ENCODE measurements at regions of chr12 and their contacts with region 1.

Region 1: GRCh38 chr12:128387811-128388422 is 120.9 kb downstream of the TMEM132C start:
- DNase-seq: peak; percentile 33 to 37
- ATAC-seq: peak in 7 of 8 donors; percentile 44 to 69 (median 50)
- H3K4me3 ChIP-seq: no peak overlapping the region
- H3K27ac ChIP-seq: peak overlapping the region in 5 of 10 donors; percentile 13 to 49 (median 35)
- H3K4me1 ChIP-seq: peaks cover 0 to 10% (median 0%) of the 10 kb centered on the region in 9 donors
- H3K27me3 ChIP-seq: peaks cover 0 to 49% (median 24%) of the 10 kb centered on the region in 7 donors
- CTCF ChIP-seq: peak; percentile 27 to 66 (median 60)

Region 2: DNA sequence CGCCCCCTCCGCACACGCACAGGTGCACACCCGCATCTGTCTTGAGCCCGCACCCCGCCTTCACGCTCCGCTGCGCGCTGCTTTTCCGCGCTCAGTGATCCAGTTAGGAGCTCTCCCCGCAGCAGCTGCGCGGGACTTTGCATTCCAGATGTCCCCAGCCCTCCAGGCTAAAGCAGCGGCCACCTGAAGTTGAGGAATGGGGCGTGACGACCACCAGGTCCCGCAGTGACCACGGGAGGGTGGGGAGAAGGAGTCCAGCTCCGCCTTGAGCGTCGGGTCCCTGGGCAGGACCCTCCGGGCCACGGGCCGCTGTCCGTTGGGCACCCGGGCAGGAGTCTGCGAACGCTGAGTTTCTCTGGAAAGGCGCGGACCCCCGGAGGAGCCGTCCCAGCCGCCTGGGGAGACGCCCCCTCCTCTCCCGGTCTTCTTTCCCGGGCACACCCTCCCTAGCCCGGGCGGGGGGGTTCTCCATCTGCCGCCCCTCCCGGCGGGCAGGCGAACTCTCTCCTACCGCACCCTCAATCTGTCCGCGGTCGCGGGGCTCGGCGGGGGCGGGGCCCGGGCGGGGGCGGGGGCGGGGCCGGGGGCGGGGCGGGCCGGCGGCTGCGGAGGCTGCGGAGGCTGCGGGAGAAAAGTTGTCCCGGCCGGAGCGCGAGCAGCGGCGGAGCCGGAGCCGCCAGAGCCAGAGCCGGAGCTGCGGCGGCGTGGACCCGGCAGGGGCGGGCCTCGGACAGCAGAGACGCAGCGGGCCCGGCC is 121.2 kb before region 1 on chr12 and contains the start of gene TMEM132C:
- intact Hi-C with region 1: loop called in 4 of 10 experiments (anchors 5 to 10 kb)
- DNase-seq: no peak
- ATAC-seq: peak in 4 of 8 donors; percentile 9 to 39 (median 18)
- H3K4me3 ChIP-seq: peak within 1 kb of the TSS in 9 of 10 donors; percentile 30 to 53 (median 41)
- H3K27ac ChIP-seq: no peak within 1 kb of the TSS
- H3K4me1 ChIP-seq: peaks cover 0 to 17% (median 7%) of the 10 kb centered on the region in 9 donors
- H3K27me3 ChIP-seq: peaks cover 12 to 81% (median 66%) of the 10 kb centered on the region in 7 donors
- CTCF ChIP-seq: no peak
- total RNA-seq, gene TMEM132C: 0.79 to 2.2 (median 1.6) TPM

Region 3: GRCh38 chr12:128510511-128510910 is 122.6 kb after region 1 on chr12:
- intact Hi-C with region 1: no loop called
- DNase-seq: no peak
- ATAC-seq: no peak
- H3K4me3 ChIP-seq: no peak overlapping the region
- H3K27ac ChIP-seq: no peak overlapping the region
- H3K4me1 ChIP-seq: no peaks in the 10 kb centered on the region
- H3K27me3 ChIP-seq: no peaks in the 10 kb centered on the region
- CTCF ChIP-seq: no peak

Measured in heart right ventricle (tissue), 16 donors.